ENCODE measurements at regions of chr3 and their contacts with region 1.

Region 1: GRCh38 chr3:71087143-71088018 is 496.1 kb downstream of the FOXP1 start:
- DNase-seq: peak; percentile 69
- H3K4me3 Mint-ChIP-seq: peak overlapping the region; percentile 14
- H3K27ac Mint-ChIP-seq: peak overlapping the region; percentile 88
- H3K4me1 Mint-ChIP-seq: peaks cover 89% of the 10 kb centered on the region
- H3K27me3 Mint-ChIP-seq: no peaks in the 10 kb centered on the region

Region 2: DNA sequence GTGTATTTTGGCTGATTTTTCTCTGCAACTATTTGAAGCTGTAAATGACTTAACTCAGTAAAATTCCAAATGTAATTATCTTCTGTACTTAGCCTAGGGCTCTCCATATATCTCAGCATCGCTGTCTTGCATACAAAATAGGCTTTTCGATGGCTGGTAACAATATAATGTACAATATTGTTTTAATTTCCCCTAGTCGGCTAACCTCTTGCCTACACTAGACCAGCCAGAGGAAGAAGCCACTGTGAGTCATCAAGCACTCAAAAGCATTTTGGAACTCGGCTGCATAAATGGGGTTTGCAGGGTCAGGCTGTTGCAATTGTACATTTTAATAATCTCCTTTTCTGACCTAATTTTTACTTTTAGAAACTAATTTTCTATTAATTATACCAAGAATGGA is 87.7 kb before region 1 on chr3:
- CTCF ChIA-PET with region 1: no interaction called
- intact Hi-C with region 1: no loop called
- DNase-seq: no peak
- H3K4me3 Mint-ChIP-seq: no peak overlapping the region
- H3K27ac Mint-ChIP-seq: no peak overlapping the region
- H3K4me1 Mint-ChIP-seq: peaks cover 52% of the 10 kb centered on the region
- H3K27me3 Mint-ChIP-seq: no peaks in the 10 kb centered on the region

Region 3: DNA sequence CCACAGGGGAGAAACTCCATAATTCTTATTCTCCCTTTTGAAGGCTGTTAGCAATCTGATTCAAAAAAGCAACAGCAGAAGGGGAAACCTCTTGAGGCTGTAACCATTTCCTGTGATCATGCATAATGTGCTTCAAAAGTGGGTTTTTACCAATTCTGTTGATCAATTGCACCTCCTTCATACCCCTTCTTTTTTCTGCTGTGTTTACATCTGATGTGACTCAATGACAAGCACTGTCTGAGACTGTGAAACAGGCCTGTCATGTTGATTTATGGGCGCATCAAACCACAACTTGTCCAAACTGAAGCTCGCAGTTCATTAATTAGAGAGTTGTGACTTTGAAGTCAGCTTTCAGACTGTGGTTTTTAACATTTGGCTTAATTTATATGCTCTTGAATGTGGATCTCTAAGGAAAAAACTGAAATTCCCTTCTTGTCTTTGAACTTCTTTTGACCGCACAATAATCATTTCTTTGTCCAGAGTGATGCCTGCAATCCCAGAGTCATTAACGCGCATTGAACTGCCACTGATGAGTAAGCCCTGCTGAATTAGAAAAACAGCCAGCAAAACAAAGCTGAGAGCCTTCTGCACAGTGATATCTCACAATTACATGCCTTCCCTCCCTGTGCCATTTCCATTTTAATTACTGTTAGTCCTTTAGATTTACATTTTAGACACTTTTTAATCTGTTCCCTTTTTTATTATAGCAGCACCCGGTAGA is 36.7 kb before region 1 on chr3:
- CTCF ChIA-PET with region 1: no interaction called
- intact Hi-C with region 1: loop called (anchors 1 kb)
- DNase-seq: peak; percentile 77
- H3K4me3 Mint-ChIP-seq: peak overlapping the region; percentile 6
- H3K27ac Mint-ChIP-seq: peak overlapping the region; percentile 92
- H3K4me1 Mint-ChIP-seq: peaks cover 100% of the 10 kb centered on the region
- H3K27me3 Mint-ChIP-seq: no peaks in the 10 kb centered on the region

Region 4: DNA sequence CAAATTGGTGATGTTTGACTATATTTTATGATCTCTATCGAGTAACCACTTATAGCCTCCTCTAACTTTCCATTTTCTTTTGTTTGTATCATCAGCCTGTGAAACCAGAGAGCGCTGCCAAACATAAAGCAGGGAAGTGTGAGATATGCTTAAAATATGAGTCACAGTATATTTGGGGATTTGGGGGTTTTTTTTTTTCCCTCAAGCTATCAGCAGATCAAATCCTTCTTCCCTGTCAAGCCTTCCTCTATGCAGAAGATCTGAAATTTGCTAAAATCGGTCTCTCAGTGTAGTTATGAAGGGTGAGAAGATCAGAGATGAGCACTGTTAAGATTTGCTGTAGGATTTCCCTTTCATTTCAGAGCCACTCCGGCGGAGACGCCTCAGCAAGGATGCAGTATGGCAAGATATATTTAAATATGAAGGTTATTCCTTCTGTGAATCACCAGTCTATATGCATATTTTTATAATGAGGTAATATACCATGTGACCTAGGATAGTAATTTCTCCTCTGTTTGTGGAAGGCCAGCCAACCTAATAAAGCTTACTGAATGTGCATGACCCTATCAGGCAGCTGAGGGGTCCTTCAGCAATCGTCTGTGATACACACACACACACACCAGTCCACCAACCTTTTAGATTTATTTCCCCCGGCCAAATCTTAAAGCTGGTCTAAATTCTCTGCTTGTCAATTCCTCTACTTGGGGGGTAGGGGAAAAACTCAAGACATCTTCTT is 22.0 kb after region 1 on chr3:
- CTCF ChIA-PET with region 1: interaction called, 4 read pairs
- intact Hi-C with region 1: loop called (anchors 1 kb)
- DNase-seq: no peak
- H3K4me3 Mint-ChIP-seq: peak overlapping the region; percentile 41
- H3K27ac Mint-ChIP-seq: peak overlapping the region; percentile 79
- H3K4me1 Mint-ChIP-seq: peaks cover 87% of the 10 kb centered on the region
- H3K27me3 Mint-ChIP-seq: no peaks in the 10 kb centered on the region

Region 5: DNA sequence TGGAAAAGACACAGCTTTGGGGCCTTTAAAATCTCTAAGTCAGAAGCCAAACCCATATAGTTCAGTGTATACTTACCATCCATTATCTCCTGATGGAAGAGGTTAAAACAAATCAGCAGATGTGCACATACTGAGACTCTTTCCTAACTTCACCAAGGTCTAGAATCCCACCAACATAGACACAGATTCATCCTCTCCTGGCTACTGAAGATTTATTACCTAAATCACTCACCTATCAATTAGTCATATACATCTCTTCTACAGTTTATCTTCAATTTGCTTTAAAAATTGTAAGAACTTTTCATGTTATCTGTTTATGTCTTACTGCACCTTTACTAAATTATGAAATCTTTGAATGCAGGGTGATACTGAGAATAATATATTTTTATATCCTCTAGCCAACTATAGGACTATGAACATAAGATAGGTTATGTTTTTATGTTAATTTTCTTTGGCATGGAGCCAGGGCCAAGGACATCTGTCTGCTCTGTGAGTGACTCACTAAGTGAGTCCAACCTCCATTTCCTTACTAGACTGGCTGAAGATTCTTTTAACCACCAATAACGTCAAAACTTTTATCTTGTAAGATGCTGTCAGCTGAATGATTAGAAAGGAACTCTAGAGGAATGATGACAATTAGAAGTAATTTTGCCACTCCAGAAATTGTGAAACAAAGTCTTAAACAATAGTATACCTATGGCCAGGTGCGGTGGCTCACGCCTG is 98.5 kb after region 1 on chr3:
- CTCF ChIA-PET with region 1: interaction called, 3 read pairs
- intact Hi-C with region 1: loop called (anchors 1 kb)
- DNase-seq: peak; percentile 50
- H3K4me3 Mint-ChIP-seq: no peak overlapping the region
- H3K27ac Mint-ChIP-seq: peak overlapping the region; percentile 37
- H3K4me1 Mint-ChIP-seq: peaks cover 67% of the 10 kb centered on the region
- H3K27me3 Mint-ChIP-seq: no peaks in the 10 kb centered on the region

Region 6: DNA sequence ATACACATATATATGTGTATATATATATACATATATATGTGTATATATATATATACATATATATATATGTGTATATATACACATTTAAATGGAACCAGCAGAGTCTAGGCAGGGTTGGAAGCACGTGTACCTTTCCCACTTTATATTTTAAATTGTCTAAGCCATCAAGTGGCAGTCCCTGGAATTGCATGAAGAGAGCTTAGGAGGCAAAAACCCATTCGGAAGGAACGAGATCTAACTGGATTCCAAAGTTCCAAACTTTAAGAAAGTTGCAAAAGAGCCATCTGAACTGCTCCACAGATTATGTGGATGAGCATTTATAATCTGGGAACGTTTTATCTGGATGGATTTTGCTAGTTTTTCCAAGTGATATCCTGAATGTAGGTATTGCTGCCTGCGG is 309.7 kb after region 1 on chr3:
- CTCF ChIA-PET with region 1: no interaction called
- intact Hi-C with region 1: loop called (anchors 1 kb)
- DNase-seq: peak; percentile 35
- H3K4me3 Mint-ChIP-seq: peak overlapping the region; percentile 5
- H3K27ac Mint-ChIP-seq: no peak overlapping the region
- H3K4me1 Mint-ChIP-seq: peaks cover 81% of the 10 kb centered on the region
- H3K27me3 Mint-ChIP-seq: no peaks in the 10 kb centered on the region